ENCODE measurements at regions of chr14 and their contacts with region 1.

Region 1: GRCh38 chr14:53055003-53055402 is 98.1 kb downstream of the DDHD1 start:
- DNase-seq: peak; percentile 38
- ATAC-seq: peak; percentile 65
- H3K4me3 ChIP-seq: no peak overlapping the region
- H3K27ac ChIP-seq: no peak overlapping the region
- H3K4me1 ChIP-seq: no peaks in the 10 kb centered on the region
- H3K27me3 ChIP-seq: no peaks in the 10 kb centered on the region
- CTCF ChIP-seq: peak; percentile 78
- EP300 ChIP-seq: no peak
- POLR2A ChIP-seq: no peak
- RAD21 ChIP-seq: peak; percentile 35; the same call in 1 of the 2 replicates

Region 2: DNA sequence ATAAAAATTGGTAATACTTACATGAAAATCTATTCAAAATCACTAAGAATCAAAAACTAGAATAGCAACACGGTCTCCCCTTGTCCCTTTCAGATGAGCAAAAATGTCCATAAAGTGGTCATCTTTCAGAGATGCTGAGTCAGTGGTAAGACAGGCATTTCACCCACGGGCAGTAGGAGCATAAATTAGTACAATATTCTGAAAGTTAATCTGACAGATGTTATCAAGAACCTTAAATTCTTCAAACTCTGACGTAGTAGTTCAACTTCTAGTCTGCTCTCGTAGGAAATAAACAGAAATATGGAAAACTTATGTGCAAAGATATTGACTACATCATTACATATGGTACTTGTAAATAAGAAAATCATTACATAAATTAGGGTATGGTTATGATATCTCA is 230.5 kb before region 1 on chr14:
- CTCF ChIA-PET with region 1: no interaction called
- POLR2A ChIA-PET with region 1: no interaction called
- in situ Hi-C with region 1: no loop called
- intact Hi-C with region 1: loop called (anchors 1 kb)
- DNase-seq: no peak
- ATAC-seq: no peak
- H3K4me3 ChIP-seq: no peak overlapping the region
- H3K27ac ChIP-seq: no peak overlapping the region
- H3K4me1 ChIP-seq: peaks cover 68% of the 10 kb centered on the region
- H3K27me3 ChIP-seq: no peaks in the 10 kb centered on the region
- CTCF ChIP-seq: no peak
- EP300 ChIP-seq: no peak
- POLR2A ChIP-seq: no peak
- RAD21 ChIP-seq: no peak

Region 3: DNA sequence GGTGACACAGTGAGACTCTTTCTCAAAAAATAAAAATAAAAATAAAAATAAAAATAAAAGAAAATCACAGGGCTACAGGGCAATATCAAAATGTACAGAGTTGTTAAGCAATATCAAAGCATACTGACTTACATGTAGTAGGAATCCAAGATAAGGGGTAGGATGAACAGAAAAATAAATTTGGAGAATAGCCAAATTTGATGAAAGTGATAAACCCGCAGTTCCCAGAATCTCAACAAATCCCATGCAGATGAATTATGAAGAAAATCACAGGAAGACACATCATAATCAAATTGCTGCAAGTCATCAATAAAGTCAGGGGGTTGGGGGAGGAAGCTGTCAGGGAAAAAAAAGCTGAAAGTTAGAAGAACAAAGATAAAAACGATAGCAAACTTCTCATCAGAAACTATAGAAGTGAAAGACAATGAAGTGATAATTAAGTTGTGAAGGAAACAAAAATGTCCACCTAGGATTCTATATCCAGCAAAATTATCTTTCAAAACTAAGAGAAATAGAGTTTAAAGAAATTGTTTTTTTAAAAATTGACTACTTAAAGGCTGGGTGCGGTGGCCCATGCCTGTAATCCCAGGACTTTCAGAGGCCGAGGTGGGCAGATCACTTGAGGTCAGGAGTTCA is 82.7 kb after region 1 on chr14:
- CTCF ChIA-PET with region 1: no interaction called
- POLR2A ChIA-PET with region 1: no interaction called
- in situ Hi-C with region 1: no loop called
- intact Hi-C with region 1: no loop called
- DNase-seq: no peak
- ATAC-seq: no peak
- H3K4me3 ChIP-seq: no peak overlapping the region
- H3K27ac ChIP-seq: no peak overlapping the region
- H3K4me1 ChIP-seq: no peaks in the 10 kb centered on the region
- H3K27me3 ChIP-seq: no peaks in the 10 kb centered on the region
- CTCF ChIP-seq: no peak
- EP300 ChIP-seq: no peak
- POLR2A ChIP-seq: no peak
- RAD21 ChIP-seq: no peak